A673 (cell line): ENCODE measurements at regions of chr5 and their contacts with region 1.

Region 1: GRCh38 chr5:50744776-50745175 is 78.3 kb downstream of the PARP8 start:
- DNase-seq: peak; percentile 18
- H3K4me3 ChIP-seq: peak overlapping the region; percentile 26
- H3K27ac ChIP-seq: no peak overlapping the region
- H3K4me1 ChIP-seq: peaks cover 3% of the 10 kb centered on the region
- H3K27me3 ChIP-seq: no peaks in the 10 kb centered on the region
- CTCF ChIP-seq: no peak

Region 2: GRCh38 chr5:50667653-50668595 is 76.9 kb before region 1 on chr5:
- CTCF ChIA-PET with region 1: no interaction called
- POLR2A ChIA-PET with region 1: no interaction called
- intact Hi-C with region 1: loop called (anchors 5 kb)
- DNase-seq: peak; percentile 77
- H3K4me3 ChIP-seq: peak overlapping the region; percentile 66
- H3K27ac ChIP-seq: peak overlapping the region; percentile 81
- H3K4me1 ChIP-seq: peaks cover 4% of the 10 kb centered on the region
- H3K27me3 ChIP-seq: no peaks in the 10 kb centered on the region
- CTCF ChIP-seq: no peak

Region 3: GRCh38 chr5:50794812-50795211 is 50.0 kb after region 1 on chr5:
- CTCF ChIA-PET with region 1: no interaction called
- POLR2A ChIA-PET with region 1: no interaction called
- intact Hi-C with region 1: no loop called
- DNase-seq: no peak
- H3K4me3 ChIP-seq: no peak overlapping the region
- H3K27ac ChIP-seq: no peak overlapping the region
- H3K4me1 ChIP-seq: no peaks in the 10 kb centered on the region
- H3K27me3 ChIP-seq: no peaks in the 10 kb centered on the region
- CTCF ChIP-seq: no peak